Activated CD8-positive, alpha-beta memory T cell treated with anti-CD3 and anti-CD28 coated beads, Interleukin-2, amount 10 ng/mL, durations not matched to agents 7 days and 5 days (primary cell): ENCODE measurements at regions of chr3 and their contacts with region 1.

Region 1: DNA sequence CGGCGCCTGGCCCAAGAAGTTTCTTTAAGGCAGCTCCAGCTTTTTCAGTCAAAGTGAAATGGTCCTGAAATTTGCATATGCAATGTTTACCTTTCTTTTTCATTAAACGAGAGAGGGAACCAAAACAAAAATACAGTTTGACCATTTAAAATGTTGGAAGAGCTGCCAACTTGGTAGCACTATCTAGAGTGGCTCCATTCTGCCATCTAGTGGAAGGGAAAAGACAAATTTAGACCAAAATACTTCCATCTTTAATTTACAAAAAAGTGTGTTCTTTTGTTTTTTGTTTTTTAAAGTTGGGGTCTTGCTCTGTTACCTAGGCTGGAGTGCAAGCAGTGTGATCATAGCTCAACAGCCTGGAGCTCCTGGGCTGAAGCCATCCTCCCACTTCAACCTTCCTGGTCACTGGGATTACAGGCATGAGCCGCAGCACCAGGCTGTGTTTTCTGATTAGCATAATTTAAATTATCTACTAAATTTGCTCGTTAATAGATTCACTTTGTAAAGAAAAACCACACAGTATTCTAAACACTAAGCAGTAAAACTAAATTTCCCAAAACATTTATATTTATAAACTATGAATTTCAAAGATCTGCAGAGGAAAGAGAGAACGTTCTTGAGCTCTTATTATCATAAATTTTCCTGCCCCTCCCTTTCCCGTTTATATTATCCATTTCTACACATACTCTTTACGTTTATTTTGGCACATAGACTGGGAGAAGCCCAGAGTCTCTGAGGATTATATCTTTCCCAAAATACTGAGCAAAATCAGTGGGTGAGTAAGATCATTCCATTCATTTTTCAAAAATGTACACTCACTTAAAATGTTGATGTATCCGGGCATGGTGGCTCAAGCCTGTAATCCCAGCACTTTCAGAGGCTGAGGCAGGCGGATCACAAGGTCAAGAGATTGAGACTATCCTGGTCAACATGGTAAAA is 15.4 kb upstream of the RFC4 start:
- DNase-seq: peak; percentile 39
- ATAC-seq: peak; percentile 31
- H3K4me3 Mint-ChIP-seq: no peak overlapping the region
- H3K27ac Mint-ChIP-seq: no peak overlapping the region
- H3K4me1 Mint-ChIP-seq: peaks cover 26% of the 10 kb centered on the region
- H3K27me3 Mint-ChIP-seq: peaks cover 2% of the 10 kb centered on the region

Region 2: GRCh38 chr3:186798239-186798874 is 23.3 kb before region 1 on chr3:
- CTCF ChIA-PET with region 1: interaction called, 24 read pairs
- DNase-seq: no peak
- ATAC-seq: peak; percentile 50
- H3K4me3 Mint-ChIP-seq: no peak overlapping the region
- H3K27ac Mint-ChIP-seq: peak overlapping the region; percentile 50
- H3K4me1 Mint-ChIP-seq: peaks cover 47% of the 10 kb centered on the region
- H3K27me3 Mint-ChIP-seq: no peaks in the 10 kb centered on the region

Region 3: GRCh38 chr3:186806089-186807055 is 15.3 kb before region 1 on chr3 and contains the start of gene RFC4:
- CTCF ChIA-PET with region 1: interaction called, 32 read pairs
- DNase-seq: peak; percentile 89
- ATAC-seq: peak; percentile 84
- H3K4me3 Mint-ChIP-seq: peak within 1 kb of the TSS; percentile 92
- H3K27ac Mint-ChIP-seq: peak within 1 kb of the TSS; percentile 95
- H3K4me1 Mint-ChIP-seq: peaks cover 39% of the 10 kb centered on the region
- H3K27me3 Mint-ChIP-seq: no peaks in the 10 kb centered on the region
- total RNA-seq, gene RFC4: 111 to 114 TPM

Region 4: DNA sequence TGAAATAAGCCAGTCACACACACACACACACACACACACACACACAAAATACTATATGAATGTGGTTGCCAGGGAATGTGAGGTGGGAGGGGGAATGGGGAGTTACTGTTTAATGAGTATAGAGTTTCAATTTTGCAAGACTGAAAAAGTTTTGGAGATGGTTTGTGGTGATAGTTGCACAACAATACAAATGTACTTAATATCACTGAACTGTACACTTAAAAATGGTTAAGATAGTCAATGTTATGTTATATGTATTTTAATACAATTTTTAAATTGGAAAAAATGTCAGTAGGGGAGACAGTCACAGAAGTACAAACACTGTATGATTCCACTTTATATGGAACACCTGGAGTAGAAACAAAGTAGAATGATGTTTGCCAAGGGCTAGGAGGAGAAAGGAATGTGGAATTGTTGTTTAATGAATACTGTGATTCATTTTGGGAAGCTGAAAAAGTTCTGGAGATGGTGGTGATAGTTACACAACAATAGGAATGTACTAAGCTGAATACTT is 240.9 kb after region 1 on chr3:
- CTCF ChIA-PET with region 1: no interaction called
- DNase-seq: no peak
- ATAC-seq: no peak
- H3K4me3 Mint-ChIP-seq: no peak overlapping the region
- H3K27ac Mint-ChIP-seq: peak overlapping the region; percentile 69
- H3K4me1 Mint-ChIP-seq: peaks cover 52% of the 10 kb centered on the region
- H3K27me3 Mint-ChIP-seq: no peaks in the 10 kb centered on the region